Psoas muscle (tissue), 8 donors: ENCODE measurements at regions of chr11 and their contacts with region 1.

Region 1: DNA sequence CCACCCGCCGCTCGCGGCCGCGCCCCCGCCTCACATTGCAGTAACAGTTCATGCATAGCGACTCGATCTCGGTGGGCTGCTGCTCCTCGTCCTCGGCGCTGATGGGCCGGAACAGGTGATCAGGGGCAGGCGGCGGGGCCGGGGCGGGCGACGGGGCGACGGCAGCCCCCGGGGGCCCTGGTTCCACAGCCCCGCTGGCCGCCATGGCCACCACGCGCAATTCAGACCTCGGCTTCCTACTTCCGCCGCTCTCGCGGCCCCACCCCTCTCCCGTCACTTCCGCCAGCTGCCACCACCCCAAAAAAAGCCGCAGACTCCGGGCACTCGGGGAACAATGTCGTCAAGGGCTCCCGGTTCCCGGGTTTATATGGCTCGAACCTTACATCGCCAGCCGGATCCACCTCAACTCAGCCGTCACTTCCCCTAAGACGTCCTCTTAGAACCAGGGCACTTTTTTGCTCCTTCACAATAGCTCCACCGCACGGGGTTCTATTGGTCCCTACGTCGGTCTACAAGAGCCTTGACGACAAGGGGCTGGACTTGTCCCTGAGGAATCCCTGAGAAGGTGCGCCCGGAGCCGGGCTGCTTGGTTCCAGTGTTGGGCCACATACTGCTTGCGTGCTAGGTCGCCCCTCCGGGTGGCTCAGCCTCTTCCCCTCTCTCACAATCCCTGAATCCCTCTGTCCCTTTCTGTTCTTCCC is at the start of gene ZPR1:
- DNase-seq: peak; percentile 84 to 93
- ATAC-seq: peak; percentile 83 to 95 (median 89)
- H3K4me3 ChIP-seq: peak within 1 kb of the TSS; percentile 98
- H3K27ac ChIP-seq: peak within 1 kb of the TSS; percentile 87
- H3K4me1 ChIP-seq: peaks cover 10% of the 10 kb centered on the region
- H3K27me3 ChIP-seq: no peaks in the 10 kb centered on the region
- CTCF ChIP-seq: no peak
- total RNA-seq, gene ZPR1: 41.4 to 63.2 (median 56.1) TPM

Region 2: DNA sequence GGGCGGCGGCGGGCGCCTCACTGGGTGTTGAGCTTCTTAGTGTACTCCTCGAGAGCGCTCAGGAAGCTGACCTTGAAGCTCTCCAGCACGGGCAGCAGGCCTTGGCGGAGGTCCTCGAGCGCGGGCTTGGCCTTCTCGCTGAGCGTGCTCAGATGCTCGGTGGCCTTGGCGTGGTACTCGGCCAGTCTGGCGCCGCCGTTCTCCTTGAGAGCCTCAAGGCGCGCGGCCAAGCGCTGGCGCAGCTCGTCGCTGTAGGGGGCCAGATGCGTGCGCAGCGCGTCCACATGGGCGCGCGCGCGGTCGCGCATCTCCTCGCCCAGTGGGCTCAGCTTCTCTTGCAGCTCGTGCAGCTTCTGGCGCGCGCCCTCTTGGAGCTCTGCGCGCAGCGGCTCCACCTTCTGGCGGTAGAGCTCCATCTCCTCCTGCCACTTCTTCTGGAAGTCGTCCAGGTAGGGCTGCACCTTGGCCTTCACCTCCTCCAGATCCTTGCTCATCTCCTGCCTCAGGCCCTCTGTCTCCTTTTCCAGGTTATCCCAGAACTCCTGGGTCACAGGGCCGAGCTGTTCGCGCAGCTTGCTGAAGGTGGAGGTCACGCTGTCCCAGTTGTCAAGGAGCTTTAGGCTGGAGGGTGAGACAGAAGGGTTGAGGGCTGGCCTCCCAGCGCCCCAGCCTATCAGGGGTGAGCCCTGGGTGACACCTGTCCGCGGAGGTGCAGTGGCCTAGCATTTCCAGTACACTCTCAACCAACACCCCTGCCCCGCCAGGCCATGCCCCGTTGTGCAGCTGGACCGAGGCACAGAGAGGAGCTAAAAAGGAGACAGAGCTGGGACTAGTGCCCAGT is 48.1 kb after region 1 on chr11:
- intact Hi-C with region 1: loop called (anchors 1 to 5 kb)
- DNase-seq: peak; percentile 87 to 94
- ATAC-seq: peak; percentile 87 to 95 (median 88)
- H3K4me3 ChIP-seq: peak overlapping the region; percentile 48
- H3K27ac ChIP-seq: peak overlapping the region; percentile 51
- H3K4me1 ChIP-seq: peaks cover 9% of the 10 kb centered on the region
- H3K27me3 ChIP-seq: no peaks in the 10 kb centered on the region
- CTCF ChIP-seq: peak; percentile 60

Region 3: GRCh38 chr11:117547195-117547850 is 759.4 kb after region 1 on chr11:
- intact Hi-C with region 1: no loop called
- DNase-seq: no peak
- ATAC-seq: no peak
- H3K4me3 ChIP-seq: no peak overlapping the region
- H3K27ac ChIP-seq: no peak overlapping the region
- H3K4me1 ChIP-seq: no peaks in the 10 kb centered on the region
- H3K27me3 ChIP-seq: peaks cover 0 to 13% (median 12%) of the 10 kb centered on the region in 3 donors
- CTCF ChIP-seq: no peak